Activated CD4-positive, alpha-beta memory T cell treated with anti-CD3 and anti-CD28 coated beads, Interleukin-2, amount 10 ng/mL, durations not matched to agents 7 days and 5 days (primary cell): ENCODE measurements at regions of chr17 and their contacts with region 1.

Region 1: DNA sequence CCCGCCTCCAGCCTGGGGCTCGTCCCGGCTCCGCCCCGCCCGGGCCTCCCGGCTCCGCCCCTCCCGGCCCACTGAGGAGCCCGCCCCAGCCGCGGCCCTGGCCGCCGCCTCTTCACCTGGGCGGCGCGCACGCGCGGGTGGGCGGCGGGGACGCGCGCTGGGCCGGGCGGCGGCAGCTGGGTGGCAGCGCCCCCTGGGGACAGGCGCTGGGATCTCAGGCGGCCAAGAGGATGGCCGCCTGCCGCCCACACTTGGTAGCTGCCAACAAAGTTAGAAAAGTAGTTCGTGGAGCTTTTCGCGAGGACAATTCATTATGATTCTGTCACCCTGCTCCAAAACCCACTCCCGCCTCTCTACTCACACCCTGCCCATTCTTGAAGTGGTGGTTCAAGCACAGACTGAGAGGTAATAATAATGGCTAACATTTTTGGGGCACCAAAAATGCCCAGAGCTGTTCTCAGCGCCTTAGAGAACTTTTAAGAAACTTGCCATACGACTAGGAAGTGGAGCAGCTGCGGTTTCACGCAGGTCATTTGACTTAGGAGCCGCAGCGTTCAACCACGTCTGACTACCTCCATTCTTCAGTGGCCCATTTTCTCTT is 340 bp upstream of the MYO1D start:
- DNase-seq: peak; percentile 95
- H3K4me3 Mint-ChIP-seq: peak overlapping the region; percentile 65
- H3K27ac Mint-ChIP-seq: peak overlapping the region; percentile 80
- H3K4me1 Mint-ChIP-seq: peaks cover 21% of the 10 kb centered on the region
- H3K27me3 Mint-ChIP-seq: no peaks in the 10 kb centered on the region

Region 2: DNA sequence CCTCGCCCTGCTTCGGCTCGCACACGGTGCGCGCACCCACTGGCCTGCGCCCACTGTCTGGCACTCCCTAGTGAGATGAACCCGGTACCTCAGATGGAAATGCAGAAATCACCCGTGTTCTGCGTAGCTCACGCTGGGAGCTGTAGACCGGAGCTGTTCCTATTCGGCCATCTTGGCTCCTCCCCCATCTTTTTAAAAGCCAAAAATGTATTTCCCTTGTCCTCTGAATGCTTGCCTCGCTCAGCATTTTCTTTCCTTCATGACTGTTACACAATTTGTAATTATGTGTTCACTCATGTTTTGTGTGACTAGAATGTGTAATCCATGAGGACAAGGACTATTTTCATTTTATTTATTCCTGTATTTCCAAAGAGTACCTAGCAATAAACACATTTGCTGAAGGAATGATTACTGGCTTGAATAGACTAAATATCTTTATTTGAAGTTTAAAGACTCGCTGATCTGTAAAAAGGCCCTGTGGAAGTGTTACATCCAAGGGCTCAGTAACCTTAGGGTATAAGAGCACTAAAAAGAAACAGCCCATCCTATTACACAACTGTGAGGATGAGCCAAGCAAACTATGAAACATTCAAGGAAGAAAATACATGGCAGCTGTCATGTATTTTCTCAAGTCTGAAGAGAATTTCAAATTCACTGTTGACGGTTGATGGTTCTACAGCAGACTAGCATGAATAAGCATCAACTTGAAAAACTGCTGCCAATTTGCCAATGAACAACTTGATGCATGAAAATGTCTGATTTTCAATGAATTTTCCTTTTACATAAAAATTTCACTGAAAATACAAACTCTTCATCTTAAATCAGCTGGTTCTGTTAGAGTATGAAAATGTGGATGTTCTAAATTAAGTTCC is 192.9 kb before region 1 on chr17:
- CTCF ChIA-PET with region 1: no interaction called
- POLR2A ChIA-PET with region 1: no interaction called
- DNase-seq: no peak
- H3K4me3 Mint-ChIP-seq: no peak overlapping the region
- H3K27ac Mint-ChIP-seq: no peak overlapping the region
- H3K4me1 Mint-ChIP-seq: no peaks in the 10 kb centered on the region
- H3K27me3 Mint-ChIP-seq: peaks cover 3% of the 10 kb centered on the region

Region 3: DNA sequence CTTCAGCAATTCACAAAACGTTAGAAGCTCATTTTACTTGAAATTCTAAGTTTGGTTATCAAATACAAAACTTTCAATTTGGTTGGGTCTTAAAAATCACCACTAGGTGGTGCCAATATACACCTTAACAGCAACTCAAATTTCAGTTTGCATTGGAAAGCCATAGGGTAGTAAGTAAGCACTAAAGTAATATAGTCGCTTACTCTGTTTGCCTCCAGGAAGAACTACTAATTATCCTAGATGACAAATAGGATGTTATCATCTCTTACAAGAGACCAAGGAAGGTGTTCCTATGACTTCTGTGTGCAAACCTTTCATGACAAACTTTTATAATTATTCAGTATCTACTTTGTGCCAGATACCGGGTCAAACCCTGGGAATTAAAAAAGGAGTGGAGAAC is 93.7 kb before region 1 on chr17:
- CTCF ChIA-PET with region 1: interaction called, 79 read pairs
- POLR2A ChIA-PET with region 1: interaction called, 5 read pairs
- DNase-seq: no peak
- H3K4me3 Mint-ChIP-seq: no peak overlapping the region
- H3K27ac Mint-ChIP-seq: no peak overlapping the region
- H3K4me1 Mint-ChIP-seq: no peaks in the 10 kb centered on the region
- H3K27me3 Mint-ChIP-seq: peaks cover 3% of the 10 kb centered on the region

Region 4: GRCh38 chr17:32828822-32829221 is 48.4 kb before region 1 on chr17:
- CTCF ChIA-PET with region 1: interaction called, 12 read pairs
- POLR2A ChIA-PET with region 1: interaction called, 7 read pairs
- DNase-seq: no peak
- H3K4me3 Mint-ChIP-seq: no peak overlapping the region
- H3K27ac Mint-ChIP-seq: no peak overlapping the region
- H3K4me1 Mint-ChIP-seq: peaks cover 23% of the 10 kb centered on the region
- H3K27me3 Mint-ChIP-seq: peaks cover 2% of the 10 kb centered on the region

Region 5: DNA sequence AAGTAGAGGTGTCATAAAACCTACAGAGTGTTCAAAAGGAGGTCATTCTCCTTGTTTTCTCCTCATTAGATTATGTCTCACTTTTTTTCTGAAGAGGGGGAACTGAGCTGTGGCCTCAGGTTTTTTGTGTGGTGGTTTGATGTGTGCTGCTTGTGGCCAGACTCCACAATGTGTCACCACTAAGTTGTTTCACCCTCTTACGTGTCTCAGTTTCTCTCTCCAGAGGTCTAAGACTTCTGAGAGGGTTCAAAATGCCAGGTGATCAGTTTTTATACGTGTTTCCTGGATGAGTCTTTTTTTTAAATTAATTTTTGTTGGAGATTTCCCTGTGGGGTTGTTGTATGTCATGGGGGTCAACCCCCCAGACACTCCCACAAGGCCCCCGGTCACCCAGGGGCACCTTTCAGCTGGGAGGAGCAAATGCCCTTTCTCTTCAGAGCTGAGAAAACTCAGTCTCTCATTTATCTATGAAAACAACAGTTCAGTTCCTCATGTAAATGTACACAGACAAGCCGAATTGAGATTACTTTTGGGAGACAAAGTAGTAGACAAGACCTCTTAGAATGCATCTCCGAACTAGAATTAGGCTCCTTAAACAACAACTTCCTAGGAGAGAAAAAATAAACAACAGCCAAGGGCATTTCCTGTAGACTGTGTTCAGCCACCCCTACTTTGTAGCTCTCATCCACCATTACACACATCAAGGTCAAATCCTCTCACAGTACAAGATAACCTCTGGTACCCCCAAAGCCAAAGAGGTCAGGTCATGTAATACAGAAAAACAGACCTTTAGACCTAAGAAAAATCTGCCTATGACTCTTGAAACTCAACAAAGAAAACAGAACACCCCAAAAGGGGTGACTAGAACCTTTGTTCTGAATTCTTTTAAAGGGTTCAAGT is 26.8 kb after region 1 on chr17:
- CTCF ChIA-PET with region 1: interaction called, 16 read pairs
- POLR2A ChIA-PET with region 1: interaction called, 8 read pairs
- DNase-seq: peak; percentile 40
- H3K4me3 Mint-ChIP-seq: no peak overlapping the region
- H3K27ac Mint-ChIP-seq: peak overlapping the region; percentile 66
- H3K4me1 Mint-ChIP-seq: peaks cover 22% of the 10 kb centered on the region
- H3K27me3 Mint-ChIP-seq: peaks cover 10% of the 10 kb centered on the region

Region 6: DNA sequence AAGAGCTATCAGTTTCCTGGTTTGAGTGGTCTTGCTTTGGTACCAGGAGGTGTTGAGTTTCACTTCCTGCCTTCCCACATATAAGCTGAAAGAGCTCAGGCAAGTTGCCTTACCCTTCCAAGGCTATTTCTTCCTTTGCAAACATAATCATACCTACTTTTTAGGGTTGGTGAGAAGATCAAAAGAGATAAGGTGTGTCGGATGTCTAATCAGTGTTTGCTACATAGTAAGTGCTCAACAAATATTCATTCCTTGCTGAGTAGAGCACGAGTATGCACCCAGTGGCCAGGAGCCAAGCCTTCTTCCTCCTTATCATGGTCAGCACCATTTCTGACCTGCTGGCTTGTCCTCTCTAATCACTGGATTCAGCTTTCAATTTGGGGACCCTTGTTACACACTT is 38.0 kb after region 1 on chr17:
- CTCF ChIA-PET with region 1: interaction called, 50 read pairs
- POLR2A ChIA-PET with region 1: interaction called, 14 read pairs
- DNase-seq: no peak
- H3K4me3 Mint-ChIP-seq: no peak overlapping the region
- H3K27ac Mint-ChIP-seq: peak overlapping the region; percentile 52
- H3K4me1 Mint-ChIP-seq: peaks cover 49% of the 10 kb centered on the region
- H3K27me3 Mint-ChIP-seq: no peaks in the 10 kb centered on the region

Region 7: DNA sequence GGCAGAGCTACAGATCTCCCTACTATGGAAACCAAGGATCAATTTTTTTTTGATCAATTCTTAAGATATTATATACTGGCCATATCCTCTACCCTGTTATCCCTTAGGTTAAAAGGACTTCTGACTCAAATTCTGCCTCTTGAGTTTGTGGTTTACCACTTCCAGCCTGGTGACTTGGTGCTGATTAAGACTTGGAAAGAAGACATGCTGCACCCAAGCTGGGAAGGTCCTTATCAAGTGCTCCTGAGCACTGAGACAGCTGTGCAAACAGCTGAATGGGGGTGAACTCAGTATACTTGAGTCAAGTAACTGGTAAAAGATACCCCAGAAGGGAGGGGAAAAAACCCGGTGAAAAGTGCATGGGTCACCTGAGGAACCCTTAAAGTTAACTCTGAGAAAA is 93.9 kb after region 1 on chr17:
- CTCF ChIA-PET with region 1: no interaction called
- POLR2A ChIA-PET with region 1: no interaction called
- DNase-seq: peak; percentile 63
- H3K4me3 Mint-ChIP-seq: no peak overlapping the region
- H3K27ac Mint-ChIP-seq: peak overlapping the region; percentile 34
- H3K4me1 Mint-ChIP-seq: peaks cover 22% of the 10 kb centered on the region
- H3K27me3 Mint-ChIP-seq: peaks cover 21% of the 10 kb centered on the region